AG04449 (cell line): ENCODE measurements at regions of chr17 and their contacts with region 1.

Region 1: GRCh38 chr17:50297407-50297865 is 23.2 kb downstream of the TMEM92 start:
- DNase-seq: no peak
- H3K4me3 ChIP-seq: no peak overlapping the region
- CTCF ChIP-seq: peak; percentile 96

Region 2: GRCh38 chr17:50087246-50087911 is 210.1 kb before region 1 on chr17:
- CTCF ChIA-PET with region 1: interaction called, 280 read pairs
- POLR2A ChIA-PET with region 1: no interaction called
- DNase-seq: no peak
- H3K4me3 ChIP-seq: no peak overlapping the region
- CTCF ChIP-seq: peak; percentile 97

Region 3: GRCh38 chr17:50114849-50115357 is 182.5 kb before region 1 on chr17:
- CTCF ChIA-PET with region 1: interaction called, 62 read pairs
- POLR2A ChIA-PET with region 1: interaction called, 3 read pairs
- DNase-seq: no peak
- H3K4me3 ChIP-seq: no peak overlapping the region
- CTCF ChIP-seq: peak; percentile 69

Region 4: GRCh38 chr17:50139950-50140871 is 157.2 kb before region 1 on chr17:
- CTCF ChIA-PET with region 1: interaction called, 147 read pairs
- POLR2A ChIA-PET with region 1: no interaction called
- DNase-seq: no peak
- H3K4me3 ChIP-seq: no peak overlapping the region
- CTCF ChIP-seq: peak; percentile 94

Region 5: DNA sequence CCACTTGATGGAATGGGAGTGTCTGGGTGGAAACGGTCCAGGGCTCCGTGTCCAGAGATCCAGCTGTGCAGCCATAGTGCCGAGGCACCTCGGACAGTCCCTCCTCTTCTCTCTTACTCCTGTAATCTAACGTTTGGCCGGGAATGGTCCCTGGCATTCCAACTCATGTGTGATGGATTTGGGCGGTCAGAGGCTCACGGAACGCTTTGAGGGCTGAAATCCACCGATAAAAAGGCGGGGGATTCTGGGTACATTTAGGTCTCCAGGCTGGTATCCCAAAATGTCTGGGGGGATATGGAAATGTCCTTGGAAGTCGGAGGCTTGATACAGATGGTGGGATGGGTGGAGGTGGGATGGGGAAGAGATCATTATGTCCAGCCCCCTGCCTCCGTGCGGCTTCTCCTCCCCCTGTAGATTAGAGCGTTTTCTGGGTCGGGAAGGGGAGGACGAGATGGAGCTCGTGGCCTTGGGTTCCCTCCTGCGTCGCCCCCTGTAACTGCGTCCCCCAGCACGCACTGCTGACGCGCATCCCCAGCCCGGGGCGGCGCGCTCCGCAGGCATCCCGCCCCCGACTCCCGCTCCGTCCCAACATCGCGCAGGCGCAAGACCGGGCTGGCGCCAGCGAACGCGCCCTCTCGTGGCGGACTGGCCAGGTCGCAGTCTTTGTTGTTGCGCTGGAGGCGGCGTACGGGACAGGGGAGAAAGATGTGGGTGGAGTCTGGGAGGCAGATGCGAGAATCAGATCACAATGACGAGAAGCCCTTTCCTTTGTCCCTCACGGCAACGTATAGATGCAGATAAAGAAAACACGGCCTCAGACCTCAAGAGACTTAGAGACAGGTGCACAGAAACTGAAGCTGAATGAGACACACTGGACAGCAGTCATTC is 136.2 kb before region 1 on chr17:
- CTCF ChIA-PET with region 1: interaction called, 455 read pairs
- POLR2A ChIA-PET with region 1: interaction called, 3 read pairs
- DNase-seq: no peak
- H3K4me3 ChIP-seq: peak overlapping the region; percentile 75
- CTCF ChIP-seq: peak; percentile 97

Region 6: DNA sequence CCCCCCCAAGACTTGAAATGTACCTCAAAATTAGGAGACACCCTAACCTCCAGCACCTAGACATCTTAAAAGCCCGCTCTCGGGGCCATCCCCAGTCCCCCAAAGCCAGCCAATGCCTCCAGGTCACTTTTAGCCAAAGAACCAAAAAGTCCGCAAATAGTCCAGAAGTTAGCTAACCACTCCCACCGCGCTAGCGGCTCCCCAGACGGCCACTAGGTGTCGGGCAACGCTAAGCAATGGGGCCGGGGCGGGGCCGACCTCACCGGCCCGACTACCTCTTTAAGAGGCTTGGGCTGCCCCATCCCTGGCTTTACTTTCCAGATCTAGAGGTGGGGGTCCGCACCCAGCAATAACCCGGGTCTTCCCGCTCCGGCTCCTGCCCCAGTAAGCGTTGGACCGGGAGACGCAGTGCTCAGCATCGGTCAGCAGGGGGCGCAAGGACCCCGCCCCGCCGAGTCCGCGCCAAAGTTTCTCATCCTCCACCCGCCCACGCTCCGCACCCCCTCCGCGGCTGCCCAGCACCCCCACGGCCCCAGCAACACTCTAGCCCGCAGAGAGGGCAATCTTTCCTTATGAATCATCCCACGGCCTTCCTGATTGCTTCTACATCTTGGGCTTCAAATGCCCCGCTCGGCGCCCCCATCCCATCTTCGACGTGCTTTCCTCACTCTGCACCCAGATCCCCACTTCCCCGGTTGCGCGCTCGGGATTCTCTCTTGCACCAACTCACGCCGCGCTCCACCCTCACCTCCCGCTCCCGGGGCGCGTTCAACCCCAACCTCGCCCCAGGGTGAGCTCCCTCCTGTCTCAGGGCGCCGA is 96.8 kb before region 1 on chr17:
- CTCF ChIA-PET with region 1: interaction called, 15 read pairs
- POLR2A ChIA-PET with region 1: interaction called, 22 read pairs
- DNase-seq: no peak
- H3K4me3 ChIP-seq: peak overlapping the region; percentile 100
- CTCF ChIP-seq: peak; percentile 80